ENCODE measurements at regions of chr9 and their contacts with region 1.

Region 1: GRCh38 chr9:81619348-81620001 is 69.9 kb downstream of the TLE1 start:
- DNase-seq: no peak
- ATAC-seq: no peak
- H3K4me3 ChIP-seq: no peak overlapping the region
- H3K27ac ChIP-seq: peak overlapping the region in 2 of 12 donors; percentile 9 to 44
- H3K4me1 ChIP-seq: peaks cover 0 to 27% (median 14%) of the 10 kb centered on the region in 12 donors
- H3K27me3 ChIP-seq: no peaks in the 10 kb centered on the region
- CTCF ChIP-seq: no peak
- POLR2A ChIP-seq: no peak

Region 2: GRCh38 chr9:81477669-81478068 is 141.8 kb before region 1 on chr9:
- intact Hi-C with region 1: no loop called
- DNase-seq: no peak
- ATAC-seq: no peak
- H3K4me3 ChIP-seq: no peak overlapping the region
- H3K27ac ChIP-seq: no peak overlapping the region
- H3K4me1 ChIP-seq: peaks cover 0 to 4% (median 0%) of the 10 kb centered on the region in 12 donors
- H3K27me3 ChIP-seq: no peaks in the 10 kb centered on the region
- CTCF ChIP-seq: no peak
- POLR2A ChIP-seq: no peak

Region 3: GRCh38 chr9:81529556-81530195 is 89.8 kb before region 1 on chr9:
- intact Hi-C with region 1: no loop called
- DNase-seq: no peak
- ATAC-seq: peak in 3 of 4 donors; percentile 72 to 81 (median 80)
- H3K4me3 ChIP-seq: no peak overlapping the region
- H3K27ac ChIP-seq: no peak overlapping the region
- H3K4me1 ChIP-seq: peaks cover 0 to 17% (median 0%) of the 10 kb centered on the region in 12 donors
- H3K27me3 ChIP-seq: no peaks in the 10 kb centered on the region
- CTCF ChIP-seq: no peak
- POLR2A ChIP-seq: no peak

Region 4: GRCh38 chr9:81558091-81558830 is 61.2 kb before region 1 on chr9:
- intact Hi-C with region 1: loop called in 1 of 10 experiments (anchors 10 kb)
- DNase-seq: no peak
- ATAC-seq: peak; percentile 52 to 80 (median 78)
- H3K4me3 ChIP-seq: no peak overlapping the region
- H3K27ac ChIP-seq: peak overlapping the region in 8 of 12 donors; percentile 6 to 63 (median 48)
- H3K4me1 ChIP-seq: peaks cover 0 to 21% (median 9%) of the 10 kb centered on the region in 12 donors
- H3K27me3 ChIP-seq: no peaks in the 10 kb centered on the region
- CTCF ChIP-seq: no peak
- POLR2A ChIP-seq: no peak

Measured in heart left ventricle (tissue), 16 donors.